Tibial artery (tissue), 4 donors: ENCODE measurements at regions of chr14 and their contacts with region 1.

Region 1: DNA sequence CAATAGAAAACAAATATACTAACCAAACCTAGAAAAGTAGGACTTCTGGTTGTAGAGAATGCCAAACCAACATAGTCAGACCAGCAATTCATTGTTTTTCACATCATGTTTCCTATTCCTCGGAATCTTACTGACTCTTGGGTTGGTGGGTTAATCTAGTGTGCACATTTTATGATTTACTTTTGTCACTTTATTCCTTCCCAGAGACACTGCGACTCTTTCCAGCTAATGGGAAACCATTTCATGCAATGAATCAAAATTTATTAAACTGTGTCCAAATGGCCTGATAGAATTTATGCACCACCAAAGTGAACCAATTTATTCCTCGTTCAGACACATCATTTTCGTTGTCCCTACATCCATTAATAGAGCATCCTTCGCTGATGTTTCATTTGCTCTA is 464.9 kb downstream of the RPS29 start:
- DNase-seq: no peak
- H3K4me3 ChIP-seq: no peak overlapping the region
- H3K27ac ChIP-seq: no peak overlapping the region
- H3K4me1 ChIP-seq: no peaks in the 10 kb centered on the region
- H3K27me3 ChIP-seq: no peaks in the 10 kb centered on the region
- CTCF ChIP-seq: no peak

Region 2: GRCh38 chr14:49427117-49427516 is 305.9 kb after region 1 on chr14:
- intact Hi-C with region 1: loop called (anchors 5 kb)
- DNase-seq: no peak
- H3K4me3 ChIP-seq: no peak overlapping the region
- H3K27ac ChIP-seq: no peak overlapping the region
- H3K4me1 ChIP-seq: no peaks in the 10 kb centered on the region
- H3K27me3 ChIP-seq: no peaks in the 10 kb centered on the region
- CTCF ChIP-seq: no peak